Activated CD4-positive, alpha-beta memory T cell treated with anti-CD3 and anti-CD28 coated beads for 36 hours (primary cell): ENCODE measurements at regions of chr17 and their contacts with region 1.

Region 1: DNA sequence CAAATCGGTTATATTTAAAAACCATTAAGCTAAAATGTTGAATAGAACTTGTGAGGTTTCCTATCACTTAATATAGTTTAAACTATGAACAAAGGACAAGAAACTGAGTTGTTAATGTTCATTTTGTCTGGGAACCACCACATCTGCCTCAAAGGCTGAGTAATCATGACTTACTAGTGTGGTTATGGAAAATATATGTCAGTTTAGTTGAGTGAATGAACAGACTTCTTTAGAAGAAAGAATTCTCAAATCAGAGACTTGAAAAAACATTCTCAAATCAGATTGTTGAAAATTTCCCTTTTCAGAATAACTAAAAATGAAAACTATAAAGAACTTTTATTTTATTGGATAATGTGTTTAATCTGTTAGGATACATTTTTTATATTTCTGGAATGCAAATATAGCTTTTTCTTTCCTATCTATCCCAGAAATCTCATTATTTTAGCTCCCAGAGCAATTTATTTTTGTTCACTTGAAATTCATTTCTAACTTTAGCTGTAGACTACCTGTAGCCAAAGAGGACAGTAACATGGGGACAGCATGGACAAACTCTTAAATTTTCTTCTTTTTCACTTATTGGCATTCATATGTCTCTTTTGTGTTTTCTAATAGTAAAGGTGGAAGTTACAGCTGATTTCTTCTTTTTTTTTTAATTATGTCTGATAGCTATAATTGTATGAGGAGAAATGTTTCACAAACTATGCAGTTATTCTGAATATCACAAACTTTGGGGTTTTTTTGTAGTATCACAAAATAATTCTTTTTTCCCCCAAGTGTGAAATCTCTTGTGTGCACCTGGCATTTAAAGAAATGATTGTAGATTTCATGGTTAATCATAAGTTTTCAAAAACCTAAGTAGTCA is 55.3 kb downstream of the VMP1 start:
- DNase-seq: peak; percentile 24
- H3K4me3 Mint-ChIP-seq: peak overlapping the region; percentile 48
- H3K27ac Mint-ChIP-seq: peak overlapping the region; percentile 97
- H3K4me1 Mint-ChIP-seq: peaks cover 61% of the 10 kb centered on the region
- H3K27me3 Mint-ChIP-seq: no peaks in the 10 kb centered on the region

Region 2: DNA sequence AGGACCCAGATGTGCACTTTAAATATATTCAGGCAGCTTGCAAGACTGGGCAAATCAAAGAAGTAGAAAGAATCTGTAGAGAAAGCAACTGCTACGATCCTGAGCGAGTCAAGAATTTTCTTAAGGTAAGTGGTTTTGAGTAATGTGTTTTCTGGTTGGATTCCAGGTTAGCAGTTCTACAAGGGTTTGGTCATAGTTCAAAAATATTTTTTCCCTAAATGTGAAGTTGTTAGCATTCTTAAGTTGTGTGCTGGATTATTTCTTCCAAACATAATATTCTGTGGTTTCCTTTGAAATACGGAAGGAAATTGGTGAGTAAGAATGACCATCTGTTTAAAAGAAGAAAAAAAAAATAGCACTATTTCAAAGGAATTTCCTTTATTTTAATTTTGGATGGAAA is 93.9 kb before region 1 on chr17:
- CTCF ChIA-PET with region 1: no interaction called
- POLR2A ChIA-PET with region 1: no interaction called
- intact Hi-C with region 1: no loop called
- DNase-seq: no peak
- H3K4me3 Mint-ChIP-seq: no peak overlapping the region
- H3K27ac Mint-ChIP-seq: peak overlapping the region; percentile 38
- H3K4me1 Mint-ChIP-seq: peaks cover 34% of the 10 kb centered on the region
- H3K27me3 Mint-ChIP-seq: no peaks in the 10 kb centered on the region

Region 3: GRCh38 chr17:59778996-59779395 is 16.3 kb after region 1 on chr17:
- CTCF ChIA-PET with region 1: interaction called, 6 read pairs
- POLR2A ChIA-PET with region 1: interaction called, 193 read pairs
- intact Hi-C with region 1: no loop called
- DNase-seq: no peak
- H3K4me3 Mint-ChIP-seq: peak overlapping the region; percentile 2
- H3K27ac Mint-ChIP-seq: peak overlapping the region; percentile 88
- H3K4me1 Mint-ChIP-seq: peaks cover 58% of the 10 kb centered on the region
- H3K27me3 Mint-ChIP-seq: no peaks in the 10 kb centered on the region